ENCODE measurements at regions of chr2 and their contacts with region 1.

Region 1: DNA sequence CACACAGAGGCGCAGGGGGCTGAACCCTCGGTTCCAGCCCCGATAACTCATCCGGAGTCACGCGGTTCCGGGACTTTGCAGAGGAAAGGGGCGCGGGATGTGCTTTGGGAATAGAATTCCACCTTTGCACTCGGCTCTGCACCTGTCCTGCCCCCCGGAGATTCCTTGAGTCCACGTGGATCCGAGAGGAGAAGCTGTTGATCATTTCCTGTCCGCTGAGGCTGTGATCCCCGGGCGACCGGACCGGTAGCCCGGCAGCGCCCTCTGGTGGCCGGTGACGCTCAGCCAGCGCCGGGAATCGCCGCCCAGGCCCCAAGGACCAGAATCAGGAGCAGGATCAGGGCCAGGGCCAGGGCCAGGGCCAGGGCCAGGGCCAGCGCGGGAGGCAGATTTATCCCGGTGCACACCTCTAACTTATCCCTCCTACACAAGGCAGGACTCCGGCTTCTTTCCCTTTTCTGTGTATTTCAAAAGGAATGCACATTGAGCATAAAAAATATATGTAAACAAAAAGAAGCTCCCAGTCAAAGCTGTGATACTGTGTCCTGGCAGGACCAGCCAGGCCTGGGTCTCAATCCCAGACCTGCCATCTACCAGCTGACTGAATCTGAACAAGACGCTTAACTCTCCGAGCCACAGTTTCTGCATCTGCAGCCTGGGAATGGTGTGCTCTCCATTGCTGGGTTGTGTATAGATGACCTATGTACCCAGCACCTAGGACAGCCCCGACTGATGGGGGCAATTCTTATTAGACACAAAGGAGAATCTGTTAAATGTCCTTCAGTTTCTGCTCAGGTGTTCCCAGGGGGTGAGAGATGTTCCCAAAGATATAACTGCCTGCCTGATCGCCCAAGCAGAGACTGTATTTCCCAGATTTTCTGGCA is 8.5 kb upstream of the SPATA3 start:
- DNase-seq: peak; percentile 83
- H3K4me3 Mint-ChIP-seq: peak overlapping the region; percentile 41
- H3K27ac Mint-ChIP-seq: peak overlapping the region; percentile 2
- H3K4me1 Mint-ChIP-seq: peaks cover 38% of the 10 kb centered on the region
- H3K27me3 Mint-ChIP-seq: peaks cover 24% of the 10 kb centered on the region

Region 2: DNA sequence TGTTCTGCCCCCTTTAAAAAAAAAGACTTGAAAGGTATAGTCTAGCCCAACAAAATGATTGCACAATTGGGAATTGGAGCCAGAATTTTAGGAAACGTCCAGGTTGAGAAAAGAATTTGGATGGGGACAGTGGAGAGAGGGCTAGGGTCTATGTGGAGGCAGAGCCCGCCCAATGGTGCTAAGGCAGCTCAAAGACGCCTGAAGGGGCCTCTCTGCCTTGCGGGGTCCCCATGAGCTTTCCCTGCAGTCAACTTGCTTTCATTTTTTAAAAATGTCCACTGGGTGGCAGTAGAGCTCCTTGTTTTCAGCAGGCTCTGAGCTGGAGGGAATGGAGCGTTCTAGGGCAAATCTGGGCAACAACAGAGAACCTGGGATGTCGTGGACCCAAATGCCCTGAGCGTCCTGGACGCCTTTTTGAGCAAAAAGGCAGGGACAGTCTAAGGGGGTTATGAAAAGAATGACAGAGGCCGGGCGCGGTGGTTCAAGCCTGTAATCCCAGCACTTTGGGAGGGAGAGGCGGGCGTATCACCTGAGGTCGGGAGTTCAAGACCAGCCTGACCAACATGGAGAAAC is 162.9 kb before region 1 on chr2:
- CTCF ChIA-PET with region 1: interaction called, 98 read pairs
- POLR2A ChIA-PET with region 1: interaction called, 6 read pairs
- intact Hi-C with region 1: loop called (anchors 1 kb)
- DNase-seq: peak; percentile 58
- H3K4me3 Mint-ChIP-seq: no peak overlapping the region
- H3K27ac Mint-ChIP-seq: no peak overlapping the region
- H3K4me1 Mint-ChIP-seq: peaks cover 9% of the 10 kb centered on the region
- H3K27me3 Mint-ChIP-seq: peaks cover 32% of the 10 kb centered on the region

Region 3: DNA sequence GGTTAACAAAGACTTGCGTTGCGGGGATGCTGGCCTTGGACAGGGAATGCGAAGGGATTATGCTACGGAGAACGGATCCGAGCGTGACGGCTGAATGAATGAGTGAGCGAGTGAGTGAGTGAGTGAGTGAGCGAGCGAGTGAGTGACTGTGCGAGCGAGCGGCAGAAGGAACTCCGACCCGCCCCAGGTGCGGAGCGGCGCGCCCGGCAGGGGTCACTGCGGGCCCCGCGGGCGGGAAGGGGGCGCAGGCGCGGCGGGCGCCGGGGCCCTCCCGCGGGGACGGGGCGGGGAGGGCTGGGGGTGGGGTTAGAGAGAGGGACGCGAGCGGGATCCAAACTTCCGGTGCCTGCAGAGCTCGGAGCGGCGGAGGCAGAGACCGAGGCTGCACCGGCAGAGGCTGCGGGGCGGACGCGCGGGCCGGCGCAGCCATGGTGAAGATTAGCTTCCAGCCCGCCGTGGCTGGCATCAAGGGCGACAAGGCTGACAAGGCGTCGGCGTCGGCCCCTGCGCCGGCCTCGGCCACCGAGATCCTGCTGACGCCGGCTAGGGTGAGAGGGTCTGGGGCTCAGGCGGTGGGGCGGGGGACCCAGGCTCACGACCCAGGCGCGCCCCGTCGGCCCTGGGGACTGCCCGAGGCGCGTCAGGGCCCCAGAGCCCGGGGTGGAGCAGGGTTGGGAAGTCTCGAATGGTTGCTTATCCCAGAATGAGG is 122.6 kb before region 1 on chr2 and contains the start of gene ITM2C:
- CTCF ChIA-PET with region 1: interaction called, 12 read pairs
- POLR2A ChIA-PET with region 1: interaction called, 4 read pairs
- intact Hi-C with region 1: no loop called
- DNase-seq: peak; percentile 85
- H3K4me3 Mint-ChIP-seq: peak within 1 kb of the TSS; percentile 83
- H3K27ac Mint-ChIP-seq: no peak within 1 kb of the TSS
- H3K4me1 Mint-ChIP-seq: peaks cover 36% of the 10 kb centered on the region
- H3K27me3 Mint-ChIP-seq: peaks cover 8% of the 10 kb centered on the region
- total RNA-seq, gene ITM2C: 19.5 to 23.0 TPM

Region 4: GRCh38 chr2:230913406-230914143 is 73.8 kb before region 1 on chr2:
- CTCF ChIA-PET with region 1: interaction called, 313 read pairs
- POLR2A ChIA-PET with region 1: interaction called, 6 read pairs
- intact Hi-C with region 1: loop called (anchors 1 kb)
- DNase-seq: peak; percentile 41
- H3K4me3 Mint-ChIP-seq: no peak overlapping the region
- H3K27ac Mint-ChIP-seq: no peak overlapping the region
- H3K4me1 Mint-ChIP-seq: peaks cover 48% of the 10 kb centered on the region
- H3K27me3 Mint-ChIP-seq: peaks cover 22% of the 10 kb centered on the region

Region 5: DNA sequence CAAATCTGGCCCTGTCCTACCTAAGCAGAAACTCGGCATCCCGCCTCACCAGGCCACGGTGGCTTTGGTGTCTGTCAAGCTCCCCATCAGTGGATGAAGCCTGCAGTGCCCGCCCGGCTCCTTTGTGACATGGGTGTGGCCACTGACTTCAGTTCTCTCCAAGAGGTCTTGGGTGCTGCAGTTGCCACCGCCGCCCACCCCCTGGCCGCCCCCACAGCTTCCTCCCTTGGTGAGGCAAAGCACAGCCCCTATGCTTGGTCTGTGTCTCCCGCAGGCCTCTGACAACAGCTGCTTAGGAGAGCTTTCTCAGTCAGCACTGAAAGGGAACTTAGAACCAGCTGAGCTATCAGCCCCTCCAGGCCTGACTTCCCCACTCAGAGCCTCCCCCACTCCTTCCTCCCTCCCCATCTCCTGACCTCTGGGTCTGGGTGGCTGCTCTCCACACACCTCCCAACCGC is 39.4 kb before region 1 on chr2:
- CTCF ChIA-PET with region 1: interaction called, 30 read pairs
- POLR2A ChIA-PET with region 1: interaction called, 4 read pairs
- intact Hi-C with region 1: loop called (anchors 1 kb)
- DNase-seq: no peak
- H3K4me3 Mint-ChIP-seq: no peak overlapping the region
- H3K27ac Mint-ChIP-seq: no peak overlapping the region
- H3K4me1 Mint-ChIP-seq: peaks cover 50% of the 10 kb centered on the region
- H3K27me3 Mint-ChIP-seq: peaks cover 19% of the 10 kb centered on the region

Region 6: DNA sequence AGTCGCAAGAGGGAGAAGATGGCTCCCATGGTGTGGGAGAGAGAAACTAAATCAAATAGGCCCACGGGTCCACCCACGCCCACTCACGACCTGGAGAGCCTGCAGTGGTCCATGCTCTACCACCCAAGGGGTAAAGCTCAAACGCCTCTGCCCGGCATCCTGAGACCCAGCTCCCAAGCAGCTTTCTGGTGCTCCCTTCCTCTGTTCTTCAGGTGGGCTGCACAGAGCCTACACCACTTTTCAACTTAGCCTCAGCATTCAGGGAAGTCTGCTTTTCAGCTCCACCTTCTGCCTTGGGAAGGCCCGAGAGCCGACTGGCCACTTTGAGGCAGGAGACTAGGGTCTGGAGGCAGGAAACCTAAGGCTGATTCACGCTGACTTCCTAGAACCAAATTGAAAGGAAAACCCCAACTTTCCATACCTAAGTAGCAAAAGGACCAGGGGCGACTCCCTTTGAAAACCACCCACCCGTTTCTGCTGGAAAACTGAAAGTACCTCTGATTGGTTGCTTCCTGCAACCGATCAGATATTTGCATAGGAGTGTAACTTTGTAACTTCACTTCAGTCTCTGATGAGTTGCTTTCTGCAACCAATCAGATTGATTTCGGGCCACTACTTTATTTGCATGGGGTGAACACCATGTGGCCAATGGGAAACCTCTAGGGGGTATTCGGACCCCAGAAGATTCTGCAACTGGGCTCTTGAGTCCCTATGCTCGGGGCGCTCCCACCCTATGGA is 18.3 kb before region 1 on chr2:
- CTCF ChIA-PET with region 1: interaction called, 15 read pairs
- POLR2A ChIA-PET with region 1: interaction called, 24 read pairs
- intact Hi-C with region 1: loop called (anchors 1 kb)
- DNase-seq: no peak
- H3K4me3 Mint-ChIP-seq: no peak overlapping the region
- H3K27ac Mint-ChIP-seq: no peak overlapping the region
- H3K4me1 Mint-ChIP-seq: peaks cover 25% of the 10 kb centered on the region
- H3K27me3 Mint-ChIP-seq: peaks cover 4% of the 10 kb centered on the region

Region 7: GRCh38 chr2:231056453-231057424 is 69.4 kb after region 1 on chr2 and contains the start of gene PSMD1:
- CTCF ChIA-PET with region 1: interaction called, 13 read pairs
- POLR2A ChIA-PET with region 1: no interaction called
- intact Hi-C with region 1: no loop called
- DNase-seq: peak; percentile 95
- H3K4me3 Mint-ChIP-seq: peak within 1 kb of the TSS; percentile 90
- H3K27ac Mint-ChIP-seq: peak within 1 kb of the TSS; percentile 98
- H3K4me1 Mint-ChIP-seq: peaks cover 56% of the 10 kb centered on the region
- H3K27me3 Mint-ChIP-seq: peaks cover 1% of the 10 kb centered on the region
- total RNA-seq, gene PSMD1: 116 TPM

Region 8: DNA sequence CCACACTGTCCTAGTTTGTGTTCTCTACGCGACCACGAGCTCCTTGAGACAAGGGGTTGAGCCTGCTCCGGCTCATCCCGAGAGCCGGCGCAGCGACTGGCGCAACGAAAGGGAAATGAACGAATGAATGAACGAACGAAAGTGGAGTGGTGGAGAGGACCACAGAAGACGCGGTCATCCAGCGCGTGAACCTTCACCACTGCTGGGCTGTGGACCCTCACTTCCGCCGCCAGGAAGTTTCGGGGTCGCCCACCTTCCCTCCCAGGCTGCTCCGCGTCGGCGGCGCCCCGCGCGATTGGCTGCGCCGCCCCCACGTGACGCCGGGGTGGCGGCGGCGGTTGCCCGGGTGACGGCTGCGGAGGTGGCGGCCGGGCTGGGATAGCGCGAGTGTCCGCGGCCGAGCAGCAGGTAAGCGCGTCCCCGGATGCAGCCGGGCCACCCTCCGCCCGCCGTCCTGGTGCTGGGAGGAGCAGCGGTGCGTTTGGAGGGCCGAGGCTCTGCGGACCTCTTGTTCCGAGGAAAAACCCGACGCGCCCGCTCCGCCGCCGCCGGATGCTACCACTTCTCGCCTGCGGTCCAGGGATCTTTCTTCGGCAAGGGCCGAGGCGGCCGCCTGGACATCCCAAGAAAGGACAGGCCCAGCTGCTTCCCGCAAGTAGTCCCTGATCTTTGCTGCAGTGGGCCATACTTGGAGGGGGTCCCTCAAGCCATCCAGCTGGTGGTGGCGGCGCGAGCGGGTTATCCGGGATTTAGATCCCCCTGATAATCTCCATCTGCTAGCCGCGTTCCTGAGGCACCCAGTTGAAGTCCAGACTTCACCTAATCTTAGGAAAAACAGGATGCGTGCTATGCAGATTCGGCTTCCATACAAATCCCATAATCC is 211.2 kb after region 1 on chr2 and contains the start of gene ARMC9:
- CTCF ChIA-PET with region 1: no interaction called
- POLR2A ChIA-PET with region 1: no interaction called
- intact Hi-C with region 1: no loop called
- DNase-seq: peak; percentile 82
- H3K4me3 Mint-ChIP-seq: peak within 1 kb of the TSS; percentile 87
- H3K27ac Mint-ChIP-seq: no peak within 1 kb of the TSS
- H3K4me1 Mint-ChIP-seq: peaks cover 6% of the 10 kb centered on the region
- H3K27me3 Mint-ChIP-seq: peaks cover 5% of the 10 kb centered on the region
- total RNA-seq, gene ARMC9: 3.0 TPM